T-cell (primary cell): ENCODE measurements at regions of chr6 and their contacts with region 1.

Region 1: DNA sequence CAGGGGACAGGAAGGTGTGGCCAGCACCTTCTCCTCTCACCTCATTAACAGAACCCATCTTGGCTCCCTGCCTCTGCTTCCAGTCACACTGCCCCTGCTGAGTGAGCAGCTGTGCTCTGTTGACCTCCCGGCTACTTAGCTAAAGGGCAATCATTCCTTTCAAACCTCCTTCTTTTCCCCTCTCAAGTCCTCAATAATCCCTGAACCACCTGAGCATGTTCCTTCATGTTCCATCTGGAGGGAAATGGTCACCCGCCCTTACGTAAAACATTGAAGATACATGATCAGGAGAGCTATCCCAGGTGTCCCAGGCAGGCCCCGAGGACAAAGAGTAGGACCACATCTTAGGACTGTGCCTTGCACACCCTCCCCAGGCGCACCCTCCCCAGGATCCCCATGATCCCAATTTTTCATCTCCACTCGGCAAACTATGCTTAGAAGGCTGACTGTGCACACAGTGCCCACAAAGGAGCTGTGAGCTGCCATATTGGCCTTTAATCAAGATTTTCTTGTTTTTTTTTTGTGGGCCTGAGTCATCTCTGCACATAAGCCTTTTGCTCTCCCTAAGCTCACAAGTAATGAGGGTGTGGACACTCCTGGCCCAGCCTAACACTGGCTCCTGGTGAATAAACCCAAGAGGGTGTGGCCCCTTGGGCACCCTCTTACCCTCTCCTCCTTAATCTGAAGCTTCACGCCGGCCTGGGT is 21.8 kb upstream of the MRPS10 start:
- DNase-seq: no peak
- ATAC-seq: no peak
- H3K4me3 ChIP-seq: no peak overlapping the region
- H3K4me3 Mint-ChIP-seq: no peak overlapping the region
- H3K27ac ChIP-seq: no peak overlapping the region
- H3K27ac Mint-ChIP-seq: peak overlapping the region in 1 of 2 donors; percentile 47
- H3K4me1 ChIP-seq: no peaks in the 10 kb centered on the region
- H3K4me1 Mint-ChIP-seq: peaks cover 0 to 6% (median 0%) of the 10 kb centered on the region in 3 donors
- H3K27me3 ChIP-seq: no peaks in the 10 kb centered on the region
- H3K27me3 Mint-ChIP-seq: no peaks in the 10 kb centered on the region

Region 2: DNA sequence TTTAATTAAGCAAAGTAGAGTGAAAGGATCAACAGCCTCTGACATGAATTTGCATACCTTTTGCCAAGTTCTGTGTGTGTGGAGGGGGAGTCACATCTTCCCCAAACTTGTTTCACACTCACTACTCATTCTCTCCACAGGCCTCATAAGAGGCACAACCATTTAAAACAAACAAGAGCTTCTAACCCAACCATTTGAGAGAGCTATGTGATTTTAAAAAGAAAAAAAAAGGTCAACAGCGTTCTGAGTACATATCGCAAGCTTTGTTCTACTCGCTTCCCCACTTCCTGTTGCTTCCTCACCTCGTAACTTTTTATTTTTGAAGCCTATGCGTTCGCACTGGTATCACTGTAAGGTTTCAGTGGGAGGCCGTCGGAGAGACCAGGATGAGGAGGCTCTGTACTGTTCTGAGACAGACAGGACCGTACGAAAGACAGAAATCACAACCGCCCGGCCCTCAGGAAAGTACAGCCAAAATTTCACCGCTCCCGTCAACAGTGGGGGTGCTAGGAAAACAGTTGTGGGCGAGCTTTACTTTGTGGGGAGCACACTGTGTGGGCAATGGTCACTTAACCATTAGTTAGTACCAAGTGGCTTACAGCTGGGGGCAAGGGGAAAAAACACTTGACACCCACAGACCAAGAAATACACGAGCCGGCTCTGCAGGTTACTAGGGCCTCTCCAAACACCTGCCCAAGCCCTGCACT is 150.9 kb after region 1 on chr6:
- CTCF ChIA-PET with region 1: no interaction called
- POLR2A ChIA-PET with region 1: interaction called in 1 of 2 experiments, 10 read pairs
- DNase-seq: peak; percentile 40 to 87 (median 62)
- ATAC-seq: peak; percentile 81 to 86 (median 84)
- H3K4me3 ChIP-seq: peak overlapping the region; percentile 12 to 35
- H3K4me3 Mint-ChIP-seq: peak overlapping the region; percentile 48 to 76 (median 65)
- H3K27ac ChIP-seq: peak overlapping the region; percentile 90
- H3K27ac Mint-ChIP-seq: peak overlapping the region; percentile 99 to 100
- H3K4me1 ChIP-seq: peaks cover 75 to 86% of the 10 kb centered on the region in 2 experiments
- H3K4me1 Mint-ChIP-seq: peaks cover 97 to 100% (median 99%) of the 10 kb centered on the region in 3 donors
- H3K27me3 ChIP-seq: no peaks in the 10 kb centered on the region
- H3K27me3 Mint-ChIP-seq: no peaks in the 10 kb centered on the region